Left colon (tissue), 2 donors: ENCODE measurements at regions of chrX and their contacts with region 1.

Region 1: DNA sequence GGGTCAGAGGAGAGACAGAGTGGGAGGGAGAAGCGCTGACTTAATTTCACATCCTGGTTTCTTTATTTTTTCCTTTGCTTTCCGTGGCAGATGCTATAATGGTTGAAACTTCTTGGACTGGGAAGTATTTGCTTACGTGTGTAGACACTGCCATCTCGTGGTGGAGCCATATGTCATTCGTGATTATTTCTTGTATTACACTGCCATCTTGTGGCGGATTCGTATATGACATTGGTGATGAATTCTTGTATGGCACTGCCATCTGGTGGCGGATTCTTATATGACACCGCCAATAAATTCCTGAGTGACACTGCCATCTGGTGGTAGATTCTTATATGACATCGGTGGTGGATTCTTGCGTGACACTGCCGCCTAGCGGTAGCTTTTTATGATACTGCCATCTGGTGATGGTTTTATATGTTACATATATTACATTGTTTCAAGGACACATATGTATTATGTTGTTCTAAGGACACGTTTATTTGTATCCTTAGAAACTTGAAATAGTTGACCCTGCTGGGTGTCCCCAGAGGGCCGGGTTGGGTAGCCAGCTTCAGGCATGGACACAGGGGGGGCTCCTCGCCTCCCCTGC is 37.3 kb upstream of the CLCN4 start:
- DNase-seq: peak; percentile 60 to 86
- ATAC-seq: peak; percentile 81

Region 2: GRCh38 chrX:9899640-9900111 is 219.8 kb before region 1 on chrX:
- intact Hi-C with region 1: no loop called
- DNase-seq: no peak
- ATAC-seq: no peak

Region 3: DNA sequence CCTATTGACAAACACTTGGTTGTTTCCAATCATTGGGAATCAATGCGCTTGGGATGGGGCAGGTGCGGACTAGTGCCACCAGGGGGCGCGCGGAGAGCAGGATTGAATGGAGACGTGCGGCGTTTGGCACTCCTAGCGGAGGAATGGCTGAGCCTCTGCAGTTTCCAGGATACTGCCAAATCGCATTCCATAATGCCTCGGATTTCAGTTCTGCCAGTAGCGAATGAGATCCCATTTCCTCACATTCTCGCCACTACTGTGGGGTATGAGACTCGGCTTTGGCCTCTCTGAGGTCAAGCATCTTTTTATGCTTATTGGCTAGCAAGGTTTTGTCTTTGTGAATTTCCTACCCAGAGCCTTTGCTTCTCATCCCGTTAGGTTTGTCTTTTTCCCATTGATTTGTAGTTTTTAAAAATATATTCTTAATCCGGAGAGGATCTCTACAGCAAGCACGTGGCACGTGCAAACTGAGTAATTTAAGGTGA is 123.6 kb before region 1 on chrX:
- intact Hi-C with region 1: loop called (anchors 5 to 10 kb)
- DNase-seq: peak; percentile 72 to 90
- ATAC-seq: peak; percentile 93